ENCODE measurements at regions of chr6 and their contacts with region 1.

Region 1: DNA sequence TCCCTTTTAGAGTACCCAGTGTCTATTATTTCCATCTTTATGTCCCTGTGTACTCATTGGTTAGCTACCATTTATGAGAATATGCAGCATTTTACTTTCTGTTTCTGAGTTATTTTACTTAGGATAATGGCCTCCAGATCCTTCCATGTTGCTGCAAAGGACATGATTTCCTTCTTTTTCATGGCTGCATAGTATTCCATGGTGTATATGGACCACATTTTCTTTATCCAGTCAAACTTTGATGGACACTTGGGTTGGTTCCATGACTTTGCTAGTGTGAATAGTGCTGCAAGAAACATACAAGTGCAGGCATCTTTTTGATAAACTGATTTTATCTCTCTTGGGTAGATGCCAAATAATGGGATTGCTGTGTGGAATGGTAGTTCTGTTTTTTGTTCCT is 55.4 kb downstream of the ZBTB2 start:
- DNase-seq: no peak
- H3K4me3 Mint-ChIP-seq: no peak overlapping the region
- H3K27ac Mint-ChIP-seq: no peak overlapping the region
- H3K4me1 Mint-ChIP-seq: peaks cover 4% of the 10 kb centered on the region
- H3K27me3 Mint-ChIP-seq: peaks cover 2% of the 10 kb centered on the region

Region 2: GRCh38 chr6:150891888-150892485 is 443.9 kb before region 1 on chr6:
- intact Hi-C with region 1: loop called (anchors 2 kb)
- DNase-seq: peak; percentile 43
- H3K4me3 Mint-ChIP-seq: no peak overlapping the region
- H3K27ac Mint-ChIP-seq: no peak overlapping the region
- H3K4me1 Mint-ChIP-seq: peaks cover 25% of the 10 kb centered on the region
- H3K27me3 Mint-ChIP-seq: no peaks in the 10 kb centered on the region

Region 3: GRCh38 chr6:151014404-151015100 is 321.4 kb before region 1 on chr6:
- intact Hi-C with region 1: loop called (anchors 1 kb)
- DNase-seq: peak; percentile 51
- H3K4me3 Mint-ChIP-seq: no peak overlapping the region
- H3K27ac Mint-ChIP-seq: no peak overlapping the region
- H3K4me1 Mint-ChIP-seq: peaks cover 4% of the 10 kb centered on the region
- H3K27me3 Mint-ChIP-seq: no peaks in the 10 kb centered on the region

Region 4: DNA sequence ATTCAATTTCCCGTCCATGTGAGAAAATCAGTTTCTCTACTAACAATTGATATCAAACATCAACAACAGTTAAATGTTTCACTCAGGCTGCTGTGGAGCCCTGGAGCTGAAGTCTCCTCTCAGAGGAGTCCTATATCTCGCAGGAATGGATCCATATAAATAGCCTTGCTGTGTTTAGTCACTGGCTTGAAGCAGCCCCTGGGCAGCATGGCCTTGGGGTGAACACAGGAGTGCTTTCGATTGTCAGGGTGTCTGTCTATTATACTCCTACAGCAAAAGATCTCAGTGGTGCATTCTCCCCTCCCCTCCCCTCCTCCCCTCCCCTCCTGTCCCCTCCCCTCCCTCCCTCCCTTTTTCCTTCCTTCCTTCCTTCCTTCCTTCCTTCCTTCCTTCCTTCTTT is 299.8 kb after region 1 on chr6:
- intact Hi-C with region 1: no loop called
- DNase-seq: no peak
- H3K4me3 Mint-ChIP-seq: no peak overlapping the region
- H3K27ac Mint-ChIP-seq: no peak overlapping the region
- H3K4me1 Mint-ChIP-seq: no peaks in the 10 kb centered on the region
- H3K27me3 Mint-ChIP-seq: peaks cover 1% of the 10 kb centered on the region

Measured in activated T-helper 2 cell treated with anti-CD3 and anti-CD28 coated beads, Interferon-gamma antibody, Interleukin-2, Interleukin-4, amounts not matched to agents 10 μg/mL and 5 μg/mL and 100 μg/mL, durations not matched to agents 14 hours and 24 hours and 36 hours (primary cell).